Activated CD4-positive, alpha-beta memory T cell treated with anti-CD3 and anti-CD28 coated beads for 36 hours (primary cell): ENCODE measurements at regions of chr6 and their contacts with region 1.

Region 1: GRCh38 chr6:96468681-96469224 is 52.9 kb upstream of the UFL1 start:
- DNase-seq: no peak
- H3K4me3 Mint-ChIP-seq: no peak overlapping the region
- H3K27ac Mint-ChIP-seq: no peak overlapping the region
- H3K4me1 Mint-ChIP-seq: peaks cover 20% of the 10 kb centered on the region
- H3K27me3 Mint-ChIP-seq: peaks cover 2% of the 10 kb centered on the region

Region 2: GRCh38 chr6:96304997-96305396 is 163.8 kb before region 1 on chr6:
- CTCF ChIA-PET with region 1: no interaction called
- POLR2A ChIA-PET with region 1: no interaction called
- intact Hi-C with region 1: loop called (anchors 5 kb)
- DNase-seq: no peak
- H3K4me3 Mint-ChIP-seq: no peak overlapping the region
- H3K27ac Mint-ChIP-seq: no peak overlapping the region
- H3K4me1 Mint-ChIP-seq: peaks cover 2% of the 10 kb centered on the region
- H3K27me3 Mint-ChIP-seq: no peaks in the 10 kb centered on the region